HepG2 (cell line): ENCODE measurements at regions of chr21 and their contacts with region 1.

Region 1: GRCh38 chr21:36927719-36928117 is 38.8 kb downstream of the HLCS start:
- DNase-seq: peak; percentile 56
- ATAC-seq: peak; percentile 95
- H3K4me3 ChIP-seq: no peak overlapping the region
- H3K27ac ChIP-seq: no peak overlapping the region
- H3K4me1 ChIP-seq: peaks cover 14% of the 10 kb centered on the region
- H3K27me3 ChIP-seq: no peaks in the 10 kb centered on the region
- CTCF ChIP-seq: peak; percentile 89
- EP300 ChIP-seq: no peak
- POLR2A ChIP-seq: no peak
- RAD21 ChIP-seq: peak; percentile 72; the same call in 1 of the 2 replicates

Region 2: DNA sequence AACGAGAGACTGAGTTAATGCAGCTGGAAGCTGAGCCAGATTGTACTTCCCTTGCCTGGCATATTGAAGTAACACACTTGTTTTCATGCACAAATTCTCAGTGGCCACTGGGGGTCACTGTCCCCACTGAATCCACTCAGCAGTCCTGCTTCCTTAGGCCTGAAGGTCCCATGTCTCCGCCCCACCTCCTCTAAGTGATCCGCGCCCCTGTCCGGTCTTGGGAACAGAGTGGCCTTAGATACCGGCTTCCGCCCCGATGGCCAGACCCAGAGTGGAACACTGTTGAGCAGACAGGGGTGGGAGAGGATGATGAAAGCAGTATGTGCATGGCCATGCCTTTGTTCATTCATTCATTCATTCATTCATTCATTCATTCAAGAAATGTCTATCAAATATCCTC is 507.7 kb before region 1 on chr21:
- CTCF ChIA-PET with region 1: no interaction called
- POLR2A ChIA-PET with region 1: no interaction called
- in situ Hi-C with region 1: no loop called
- intact Hi-C with region 1: loop called (anchors 5 kb)
- DNase-seq: peak; percentile 63
- ATAC-seq: peak; percentile 79
- H3K4me3 ChIP-seq: no peak overlapping the region
- H3K27ac ChIP-seq: no peak overlapping the region
- H3K4me1 ChIP-seq: 0 out of 2 replicates have a peak, but pooled peaks cover 9% of the 10 kb centered on the region
- H3K27me3 ChIP-seq: no peaks in the 10 kb centered on the region
- CTCF ChIP-seq: peak; percentile 93
- EP300 ChIP-seq: no peak
- POLR2A ChIP-seq: no peak
- RAD21 ChIP-seq: peak; percentile 55

Region 3: DNA sequence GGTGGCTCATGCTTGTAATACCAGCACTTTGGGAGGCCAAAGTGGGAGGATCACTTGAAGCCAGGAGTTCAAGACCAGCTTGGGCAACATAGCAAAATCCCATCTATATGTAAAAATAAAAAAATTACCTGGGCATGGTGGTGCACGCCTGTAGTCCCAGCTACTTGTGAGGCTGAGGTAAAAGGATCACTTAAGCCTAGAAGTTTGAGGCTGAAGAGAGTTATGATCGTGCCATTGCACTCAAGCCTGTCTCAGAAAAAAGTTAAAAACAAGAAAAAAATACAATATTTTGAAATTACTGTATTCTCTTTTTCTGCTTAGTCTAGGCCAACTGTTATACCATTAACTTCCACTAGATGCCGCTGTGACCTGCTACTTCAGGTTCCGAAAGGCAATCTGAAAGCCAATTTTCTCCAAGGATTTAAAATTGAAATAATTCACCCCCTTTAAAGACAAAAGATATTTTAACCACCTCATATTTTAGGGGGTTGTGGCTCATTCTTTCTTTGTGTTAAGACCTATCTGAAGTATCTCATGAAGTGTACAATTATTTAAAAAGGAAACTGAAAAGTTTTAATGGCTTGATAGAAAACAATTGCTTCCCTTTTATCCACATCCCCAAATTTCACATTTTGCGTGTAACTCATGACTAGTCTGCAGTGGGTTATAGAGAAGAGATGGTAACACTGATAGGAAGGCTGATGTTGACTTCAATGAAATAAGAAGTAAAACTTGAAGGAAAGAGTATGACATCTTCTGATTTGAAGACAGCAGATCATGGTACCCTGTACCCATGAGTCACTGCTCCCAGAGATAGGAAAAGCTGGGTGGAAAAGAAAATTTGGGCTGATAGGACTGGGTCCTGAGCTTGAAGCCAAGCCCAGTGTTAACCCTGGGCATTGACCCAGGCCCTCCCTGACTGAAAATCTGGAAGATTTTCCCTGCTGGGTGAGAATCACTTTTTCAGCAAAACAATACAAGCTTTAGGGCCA is 423.4 kb before region 1 on chr21:
- CTCF ChIA-PET with region 1: interaction called, 8 read pairs
- POLR2A ChIA-PET with region 1: no interaction called
- in situ Hi-C with region 1: loop called (anchors 5 kb)
- intact Hi-C with region 1: no loop called
- DNase-seq: peak; percentile 27
- ATAC-seq: no peak
- H3K4me3 ChIP-seq: no peak overlapping the region
- H3K27ac ChIP-seq: no peak overlapping the region
- H3K4me1 ChIP-seq: peaks cover 49% of the 10 kb centered on the region
- H3K27me3 ChIP-seq: peaks cover 0 to 12% of the 10 kb centered on the region in 2 experiments; a peak in 3 of 5 replicates
- CTCF ChIP-seq: peak; percentile 70
- EP300 ChIP-seq: no peak
- POLR2A ChIP-seq: no peak
- RAD21 ChIP-seq: peak; percentile 26; the same call in 1 of the 2 replicates

Region 4: GRCh38 chr21:36630485-36631206 is 297.1 kb before region 1 on chr21:
- CTCF ChIA-PET with region 1: interaction called, 13 read pairs
- POLR2A ChIA-PET with region 1: no interaction called
- in situ Hi-C with region 1: loop called (anchors 5 kb)
- intact Hi-C with region 1: loop called (anchors 1 kb)
- DNase-seq: peak; percentile 48
- ATAC-seq: peak; percentile 92
- H3K4me3 ChIP-seq: no peak overlapping the region
- H3K27ac ChIP-seq: no peak overlapping the region
- H3K4me1 ChIP-seq: no peaks in the 10 kb centered on the region
- H3K27me3 ChIP-seq: peaks cover 1 to 29% of the 10 kb centered on the region in 2 experiments; a peak in 4 of 5 replicates
- CTCF ChIP-seq: peak; percentile 87
- EP300 ChIP-seq: no peak
- POLR2A ChIP-seq: no peak
- RAD21 ChIP-seq: peak; percentile 65; the same call in 1 of the 2 replicates

Region 5: GRCh38 chr21:36747815-36748383 is 179.8 kb before region 1 on chr21:
- CTCF ChIA-PET with region 1: interaction called, 14 read pairs
- POLR2A ChIA-PET with region 1: no interaction called
- in situ Hi-C with region 1: loop called (anchors 5 kb)
- intact Hi-C with region 1: loop called (anchors 5 kb)
- DNase-seq: peak; percentile 23
- ATAC-seq: peak; percentile 87
- H3K4me3 ChIP-seq: peak overlapping the region; percentile 60 to 73 (median 68); a peak in 5 of 6 replicates
- H3K27ac ChIP-seq: no peak overlapping the region
- H3K4me1 ChIP-seq: peaks cover 12% of the 10 kb centered on the region
- H3K27me3 ChIP-seq: no peaks in the 10 kb centered on the region
- CTCF ChIP-seq: peak; percentile 34; the same call in 1 of the 2 replicates
- EP300 ChIP-seq: no peak
- POLR2A ChIP-seq: no peak
- RAD21 ChIP-seq: peak; percentile 38; the same call in 1 of the 2 replicates

Region 6: GRCh38 chr21:36966066-36966820 is 38.5 kb after region 1 on chr21 and contains the start of gene HLCS:
- CTCF ChIA-PET with region 1: no interaction called
- POLR2A ChIA-PET with region 1: no interaction called
- in situ Hi-C with region 1: no loop called
- intact Hi-C with region 1: no loop called
- DNase-seq: peak; percentile 59
- ATAC-seq: peak; percentile 84
- H3K4me3 ChIP-seq: peak within 1 kb of the TSS; percentile 83 to 88 (median 83)
- H3K27ac ChIP-seq: peak within 1 kb of the TSS; percentile 77
- H3K4me1 ChIP-seq: peaks cover 25% of the 10 kb centered on the region
- H3K27me3 ChIP-seq: no peaks in the 10 kb centered on the region
- CTCF ChIP-seq: peak; percentile 45
- EP300 ChIP-seq: no peak
- POLR2A ChIP-seq: peak; percentile 32 to 62; a peak in 3 of 4 replicates
- RAD21 ChIP-seq: 0 out of 2 replicates have a peak, but pooled peaks have one; percentile 20
- total RNA-seq, gene HLCS: 11.7 and 12.3 TPM in 2 replicates

Region 7: DNA sequence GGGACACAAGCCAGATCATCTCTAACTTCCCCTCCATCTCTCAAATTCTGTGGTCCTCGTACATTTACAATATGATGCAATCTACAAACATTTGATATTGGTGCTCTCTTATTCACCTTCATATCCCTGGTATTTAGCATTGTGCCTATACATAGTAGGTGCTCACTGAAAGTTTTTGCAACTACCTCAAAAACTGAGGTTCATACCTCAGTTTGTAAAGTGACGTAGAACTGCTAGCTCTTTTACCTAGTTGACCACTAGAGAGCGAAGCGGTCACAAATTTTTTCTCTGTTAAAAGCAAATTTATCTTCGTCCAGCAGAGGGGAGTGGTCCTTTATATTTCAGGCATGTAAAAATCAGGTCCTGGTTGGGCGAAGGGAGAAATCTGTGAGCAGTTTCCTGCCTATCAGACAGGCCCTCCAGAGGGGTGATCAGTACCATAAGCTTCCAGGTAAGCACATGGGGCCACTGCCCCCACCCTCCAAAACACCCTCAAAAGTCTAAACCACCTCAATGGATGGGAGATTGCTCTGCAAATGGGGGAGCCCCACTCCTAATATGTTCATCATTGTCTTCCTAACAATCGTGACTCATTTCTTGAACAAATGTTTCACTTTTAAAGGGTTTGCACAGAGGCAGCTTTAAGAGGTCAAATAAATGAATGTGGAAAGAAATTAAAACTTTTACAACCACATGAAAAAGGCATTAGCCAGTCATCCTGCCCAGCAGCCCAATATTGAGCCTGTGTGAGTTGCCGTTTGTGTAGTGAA is 49.3 kb after region 1 on chr21:
- CTCF ChIA-PET with region 1: no interaction called
- POLR2A ChIA-PET with region 1: no interaction called
- in situ Hi-C with region 1: no loop called
- intact Hi-C with region 1: no loop called
- DNase-seq: peak; percentile 87
- ATAC-seq: peak; percentile 89
- H3K4me3 ChIP-seq: peak overlapping the region in 1 of 3 experiments; percentile 7; a peak in 1 of 6 replicates
- H3K27ac ChIP-seq: peak overlapping the region; percentile 18
- H3K4me1 ChIP-seq: peaks cover 22% of the 10 kb centered on the region
- H3K27me3 ChIP-seq: no peaks in the 10 kb centered on the region
- CTCF ChIP-seq: peak; percentile 87
- EP300 ChIP-seq: no peak; a peak in 1 of 4 replicates
- POLR2A ChIP-seq: no peak
- RAD21 ChIP-seq: peak; percentile 77

Region 8: DNA sequence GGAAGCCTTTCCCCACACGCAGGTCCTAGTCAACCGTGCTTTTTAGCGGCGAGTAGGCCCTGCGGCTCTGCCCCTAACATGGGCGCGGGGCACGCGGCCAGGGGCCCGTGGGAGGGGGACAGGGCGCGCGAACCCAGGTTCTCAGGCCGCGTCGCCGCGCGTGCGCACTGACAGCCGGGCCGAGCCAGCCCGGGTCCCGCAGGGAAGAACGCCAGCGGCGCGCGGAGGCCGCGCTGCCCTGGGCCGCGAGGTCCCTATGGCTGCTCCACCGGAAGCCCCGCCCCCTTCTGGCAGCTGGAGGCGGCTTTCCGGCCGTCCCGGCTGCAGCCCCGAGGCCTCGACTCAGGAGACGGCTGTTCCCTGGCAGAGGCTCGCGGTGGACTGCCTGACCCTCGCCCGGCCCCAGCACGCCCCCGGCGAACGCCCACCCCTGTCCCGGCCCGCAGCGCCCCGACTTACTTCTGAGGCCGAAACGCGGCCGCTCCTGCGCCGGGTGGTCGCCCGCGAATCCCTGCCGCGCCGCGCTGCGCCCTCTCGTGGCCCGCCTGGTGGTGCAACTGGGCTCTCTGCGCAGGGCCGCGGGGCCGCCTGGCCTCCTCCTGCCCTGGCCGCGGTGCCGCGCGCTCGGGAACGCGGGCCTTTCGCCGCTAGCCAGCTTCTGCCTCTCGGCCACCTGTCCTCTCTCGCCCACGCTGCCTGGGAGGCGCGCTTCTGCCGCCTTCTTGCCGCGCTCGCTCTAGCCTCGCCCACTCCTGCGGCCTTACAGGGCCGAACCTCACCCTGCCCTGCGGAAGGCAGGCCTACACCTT is 62.2 kb after region 1 on chr21:
- CTCF ChIA-PET with region 1: no interaction called
- POLR2A ChIA-PET with region 1: no interaction called
- in situ Hi-C with region 1: no loop called
- intact Hi-C with region 1: no loop called
- DNase-seq: peak; percentile 80
- ATAC-seq: peak; percentile 94
- H3K4me3 ChIP-seq: peak overlapping the region; percentile 63 to 69 (median 67); a peak in 5 of 6 replicates
- H3K27ac ChIP-seq: peak overlapping the region; percentile 92
- H3K4me1 ChIP-seq: peaks cover 60% of the 10 kb centered on the region
- H3K27me3 ChIP-seq: no peaks in the 10 kb centered on the region
- CTCF ChIP-seq: peak; percentile 86
- EP300 ChIP-seq: no peak
- POLR2A ChIP-seq: peak; percentile 72 to 75; a peak in 3 of 4 replicates
- RAD21 ChIP-seq: peak; percentile 88

Region 9: DNA sequence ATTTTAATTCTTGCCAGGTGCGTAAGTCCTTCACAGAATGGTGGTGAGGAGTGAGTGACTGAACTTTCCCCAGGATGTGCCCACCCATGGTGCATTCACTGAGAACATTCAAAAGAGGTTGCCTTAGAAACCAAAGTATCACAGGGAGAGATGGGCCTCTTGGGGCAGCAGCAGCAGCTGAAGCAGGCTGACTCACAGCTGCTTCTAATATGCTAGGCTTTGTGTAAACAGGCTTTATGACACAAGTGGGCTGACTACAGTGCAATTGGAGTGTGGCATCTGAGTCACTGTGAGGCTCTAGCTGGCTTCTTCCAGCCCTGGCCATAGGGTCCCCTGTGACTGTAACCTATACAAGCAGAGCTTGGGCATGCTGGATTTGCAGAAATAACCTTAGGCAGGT is 132.6 kb after region 1 on chr21:
- CTCF ChIA-PET with region 1: no interaction called
- POLR2A ChIA-PET with region 1: no interaction called
- in situ Hi-C with region 1: no loop called
- intact Hi-C with region 1: no loop called
- DNase-seq: peak; percentile 89
- ATAC-seq: peak; percentile 98
- H3K4me3 ChIP-seq: no peak overlapping the region
- H3K27ac ChIP-seq: no peak overlapping the region
- H3K4me1 ChIP-seq: peaks cover 33% of the 10 kb centered on the region
- H3K27me3 ChIP-seq: no peaks in the 10 kb centered on the region
- CTCF ChIP-seq: peak; percentile 29; the same call in 1 of the 2 replicates
- EP300 ChIP-seq: peak in 1 of 2 experiments; percentile 37; a peak in 2 of 4 replicates
- POLR2A ChIP-seq: no peak
- RAD21 ChIP-seq: peak; percentile 40; the same call in 1 of the 2 replicates